ENCODE measurements at regions of chrX and their contacts with region 1.

Region 1: DNA sequence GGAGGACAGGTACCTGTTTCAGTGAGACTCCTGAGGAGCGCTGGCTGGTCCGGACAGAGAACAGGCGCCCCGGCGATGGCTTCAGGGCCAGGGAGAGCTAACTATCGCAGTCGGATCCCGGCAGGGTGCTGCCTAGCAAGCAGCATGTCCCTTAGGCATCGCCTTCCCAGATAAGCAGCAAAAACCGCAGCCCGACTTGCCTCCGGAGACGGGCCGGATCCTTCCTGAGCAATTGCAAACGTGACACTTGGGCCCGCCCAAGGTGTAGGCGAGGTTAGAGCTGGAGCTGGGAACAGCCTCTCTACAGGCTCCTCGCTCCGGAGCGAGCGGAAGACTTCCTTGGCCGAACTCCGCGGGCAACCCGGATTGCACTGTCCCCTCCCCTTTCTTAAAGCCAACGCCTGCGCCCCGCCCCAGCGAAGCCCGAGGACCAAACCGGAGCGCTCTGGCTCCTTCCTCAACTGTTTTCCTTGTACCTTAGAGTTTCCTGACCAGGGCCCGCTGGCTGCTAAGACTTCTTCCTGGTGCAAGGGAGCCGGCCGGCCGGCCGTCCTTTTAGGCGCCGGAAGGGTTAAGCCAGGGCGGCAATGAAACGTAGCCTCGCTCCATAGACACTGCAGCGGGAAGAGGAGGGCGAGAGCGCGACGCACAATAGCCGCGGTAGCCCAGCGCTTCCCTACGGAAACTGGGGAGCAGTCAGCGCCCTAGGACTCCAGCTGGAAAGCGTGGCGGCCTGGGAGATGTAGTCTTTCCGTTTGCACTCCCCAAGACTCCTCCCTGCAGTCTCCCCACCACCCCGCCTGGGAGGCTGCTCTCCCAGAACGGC is at the start of gene OPHN1:
- DNase-seq: peak; percentile 88
- ATAC-seq: peak; percentile 87
- H3K4me3 ChIP-seq: peak within 1 kb of the TSS; percentile 91
- H3K27ac ChIP-seq: peak within 1 kb of the TSS; percentile 84
- H3K4me1 ChIP-seq: peaks cover 32% of the 10 kb centered on the region
- H3K27me3 ChIP-seq: no peaks in the 10 kb centered on the region
- CTCF ChIP-seq: no peak
- total RNA-seq, gene OPHN1: 6.0 and 8.6 TPM in 2 replicates

Region 2: GRCh38 chrX:68307769-68308168 is 125.6 kb before region 1 on chrX:
- CTCF ChIA-PET with region 1: no interaction called
- POLR2A ChIA-PET with region 1: no interaction called
- intact Hi-C with region 1: loop called (anchors 5 kb)
- DNase-seq: peak; percentile 96
- ATAC-seq: peak; percentile 85
- H3K4me3 ChIP-seq: no peak overlapping the region
- H3K27ac ChIP-seq: peak overlapping the region; percentile 93
- H3K4me1 ChIP-seq: peaks cover 34% of the 10 kb centered on the region
- H3K27me3 ChIP-seq: no peaks in the 10 kb centered on the region
- CTCF ChIP-seq: no peak

Region 3: DNA sequence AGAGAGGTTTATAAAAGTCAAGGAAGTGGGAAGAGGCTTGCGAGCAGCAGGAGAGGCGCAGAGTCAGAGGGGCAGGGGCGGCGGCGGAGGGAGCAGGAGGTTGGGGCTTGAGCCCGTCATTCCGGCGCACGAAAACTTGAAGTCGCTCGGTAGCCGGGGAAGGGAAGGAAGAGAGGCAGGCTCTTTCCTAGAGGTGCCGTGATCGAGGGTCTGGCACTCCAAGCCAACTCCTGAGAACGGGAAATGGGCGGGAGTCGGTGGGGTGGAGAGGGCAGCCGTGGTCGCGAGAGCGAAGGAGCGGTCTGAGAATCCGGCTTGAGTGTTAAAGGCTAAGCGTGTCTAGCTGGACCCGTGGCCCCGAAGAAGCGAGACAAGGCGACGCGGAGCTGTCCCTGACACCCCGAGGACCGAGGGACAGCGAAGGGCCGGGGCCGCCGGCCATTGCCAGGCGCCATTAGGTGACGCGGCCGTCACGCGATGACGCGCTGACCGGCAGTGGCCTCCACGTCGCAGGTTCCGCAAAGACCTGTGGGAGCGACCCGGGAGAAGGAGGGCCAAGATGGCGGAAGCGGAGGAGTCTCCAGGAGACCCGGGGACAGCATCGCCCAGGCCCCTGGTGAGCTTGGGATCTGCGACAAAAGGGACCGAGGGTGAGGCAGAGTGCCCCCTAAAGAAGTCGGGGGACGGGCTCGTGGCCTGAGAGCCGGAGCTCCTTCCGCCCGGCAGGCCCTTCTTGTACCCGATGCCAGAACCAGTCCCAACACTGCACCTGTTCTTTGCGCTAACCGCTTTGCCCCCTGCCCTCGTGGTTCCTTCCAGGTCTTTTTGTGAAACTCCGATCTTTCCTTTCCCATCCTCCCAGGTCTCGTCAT is 65.4 kb after region 1 on chrX and contains the start of gene YIPF6:
- CTCF ChIA-PET with region 1: interaction called, 3 read pairs
- POLR2A ChIA-PET with region 1: no interaction called
- intact Hi-C with region 1: loop called (anchors 2 kb)
- DNase-seq: peak; percentile 79
- ATAC-seq: peak; percentile 96
- H3K4me3 ChIP-seq: peak within 1 kb of the TSS; percentile 99
- H3K27ac ChIP-seq: peak within 1 kb of the TSS; percentile 94
- H3K4me1 ChIP-seq: peaks cover 16% of the 10 kb centered on the region; the same call in 1 of the 2 replicates
- H3K27me3 ChIP-seq: no peaks in the 10 kb centered on the region
- CTCF ChIP-seq: no peak
- total RNA-seq, gene YIPF6: 36.1 and 37.0 TPM in 2 replicates

Region 4: DNA sequence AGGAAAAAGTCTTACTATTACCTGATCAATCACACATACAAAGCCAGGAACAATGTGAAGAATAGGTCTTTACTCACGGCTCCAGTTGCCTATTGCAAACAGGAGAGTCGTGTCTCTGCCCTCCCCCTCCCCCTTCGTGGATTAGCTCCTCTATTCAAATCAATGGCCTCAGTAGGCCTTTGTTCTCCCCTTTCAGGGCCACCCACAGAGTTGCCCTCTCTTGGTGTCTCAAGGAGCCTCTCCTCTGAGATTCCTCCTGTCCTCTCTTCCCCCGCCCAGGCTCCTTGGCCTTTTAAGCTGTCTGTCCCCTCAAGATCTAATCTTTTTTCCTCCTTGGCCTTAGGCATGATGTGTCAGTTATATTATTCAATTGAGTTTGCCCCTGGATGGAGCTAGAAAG is 963.5 kb after region 1 on chrX:
- CTCF ChIA-PET with region 1: no interaction called
- POLR2A ChIA-PET with region 1: no interaction called
- intact Hi-C with region 1: no loop called
- DNase-seq: no peak
- ATAC-seq: no peak
- H3K4me3 ChIP-seq: no peak overlapping the region
- H3K27ac ChIP-seq: no peak overlapping the region
- H3K4me1 ChIP-seq: no peaks in the 10 kb centered on the region
- H3K27me3 ChIP-seq: no peaks in the 10 kb centered on the region
- CTCF ChIP-seq: no peak

Measured in PC-3 (cell line).